ENCODE measurements at regions of chr12 and their contacts with region 1.

Region 1: DNA sequence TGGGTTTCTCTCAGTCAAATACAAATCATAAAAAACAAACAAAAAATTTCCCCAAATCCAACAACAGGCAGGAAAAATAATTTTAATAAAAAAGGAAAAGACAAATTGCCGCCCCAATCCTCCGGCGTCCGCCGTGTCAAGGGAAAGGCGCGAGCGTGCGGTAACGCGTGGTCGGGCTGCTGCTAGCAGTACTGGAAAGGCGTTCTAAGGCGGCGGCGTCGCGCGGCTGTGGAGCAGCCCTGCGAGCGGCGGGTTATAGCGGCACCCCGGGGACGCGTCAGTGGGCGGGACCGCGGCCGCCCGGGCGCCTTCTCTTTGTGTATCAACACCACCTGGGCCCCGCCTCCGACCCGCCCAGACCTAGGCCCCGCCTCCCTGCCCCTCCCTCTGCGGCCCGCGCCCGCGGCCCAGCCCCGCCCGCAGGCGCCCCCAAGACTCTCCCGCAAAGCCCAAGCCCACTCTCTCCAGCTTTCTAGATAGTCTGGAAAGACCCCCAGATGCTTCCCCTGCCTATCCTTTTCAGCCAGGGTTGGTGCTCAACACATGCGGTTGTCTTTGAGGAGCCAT is at the start of gene SLC38A2:
- DNase-seq: peak; percentile 93
- H3K4me3 ChIP-seq: peak within 1 kb of the TSS; percentile 90 to 98 (median 91)
- H3K27ac ChIP-seq: peak within 1 kb of the TSS; percentile 96
- H3K4me1 ChIP-seq: peaks cover 29% of the 10 kb centered on the region
- H3K27me3 ChIP-seq: no peaks in the 10 kb centered on the region
- CTCF ChIP-seq: no peak
- POLR2A ChIP-seq: peak; percentile 100
- total RNA-seq, gene SLC38A2: 427 and 459 TPM in 2 replicates

Region 2: GRCh38 chr12:46246021-46246700 is 126.5 kb before region 1 on chr12:
- CTCF ChIA-PET with region 1: no interaction called
- POLR2A ChIA-PET with region 1: no interaction called
- dilution Hi-C with region 1: no loop called
- intact Hi-C with region 1: no loop called
- DNase-seq: peak; percentile 25
- H3K4me3 ChIP-seq: no peak overlapping the region
- H3K27ac ChIP-seq: no peak overlapping the region
- H3K4me1 ChIP-seq: peaks cover 9% of the 10 kb centered on the region
- H3K27me3 ChIP-seq: no peaks in the 10 kb centered on the region
- CTCF ChIP-seq: no peak
- POLR2A ChIP-seq: no peak

Region 3: GRCh38 chr12:46268590-46269558 is 103.8 kb before region 1 on chr12 and contains the start of gene SLC38A1:
- CTCF ChIA-PET with region 1: no interaction called
- POLR2A ChIA-PET with region 1: no interaction called
- dilution Hi-C with region 1: no loop called
- intact Hi-C with region 1: loop called (anchors 5 kb)
- DNase-seq: peak; percentile 73
- H3K4me3 ChIP-seq: peak within 1 kb of the TSS; percentile 59 to 85 (median 84)
- H3K27ac ChIP-seq: peak within 1 kb of the TSS; percentile 82
- H3K4me1 ChIP-seq: peaks cover 31% of the 10 kb centered on the region
- H3K27me3 ChIP-seq: no peaks in the 10 kb centered on the region
- CTCF ChIP-seq: no peak
- POLR2A ChIP-seq: peak; percentile 66
- total RNA-seq, gene SLC38A1: 81.0 and 86.4 TPM in 2 replicates

Region 4: GRCh38 chr12:46430340-46430948 is 57.8 kb after region 1 on chr12:
- CTCF ChIA-PET with region 1: interaction called, 5 read pairs
- POLR2A ChIA-PET with region 1: interaction called, 20 read pairs
- dilution Hi-C with region 1: no loop called
- intact Hi-C with region 1: loop called (anchors 1 kb)
- DNase-seq: peak; percentile 97
- H3K4me3 ChIP-seq: peak overlapping the region in 1 of 3 experiments; percentile 48
- H3K27ac ChIP-seq: peak overlapping the region; percentile 99
- H3K4me1 ChIP-seq: peaks cover 43% of the 10 kb centered on the region
- H3K27me3 ChIP-seq: no peaks in the 10 kb centered on the region
- CTCF ChIP-seq: no peak
- POLR2A ChIP-seq: peak; percentile 72

Region 5: GRCh38 chr12:46473634-46474329 is 101.2 kb after region 1 on chr12:
- CTCF ChIA-PET with region 1: interaction called, 3 read pairs
- POLR2A ChIA-PET with region 1: no interaction called
- dilution Hi-C with region 1: no loop called
- intact Hi-C with region 1: loop called (anchors 1 kb)
- DNase-seq: peak; percentile 98
- H3K4me3 ChIP-seq: peak overlapping the region in 1 of 3 experiments; percentile 29
- H3K27ac ChIP-seq: peak overlapping the region; percentile 94
- H3K4me1 ChIP-seq: peaks cover 56% of the 10 kb centered on the region
- H3K27me3 ChIP-seq: no peaks in the 10 kb centered on the region
- CTCF ChIP-seq: no peak
- POLR2A ChIP-seq: peak; percentile 19

Region 6: DNA sequence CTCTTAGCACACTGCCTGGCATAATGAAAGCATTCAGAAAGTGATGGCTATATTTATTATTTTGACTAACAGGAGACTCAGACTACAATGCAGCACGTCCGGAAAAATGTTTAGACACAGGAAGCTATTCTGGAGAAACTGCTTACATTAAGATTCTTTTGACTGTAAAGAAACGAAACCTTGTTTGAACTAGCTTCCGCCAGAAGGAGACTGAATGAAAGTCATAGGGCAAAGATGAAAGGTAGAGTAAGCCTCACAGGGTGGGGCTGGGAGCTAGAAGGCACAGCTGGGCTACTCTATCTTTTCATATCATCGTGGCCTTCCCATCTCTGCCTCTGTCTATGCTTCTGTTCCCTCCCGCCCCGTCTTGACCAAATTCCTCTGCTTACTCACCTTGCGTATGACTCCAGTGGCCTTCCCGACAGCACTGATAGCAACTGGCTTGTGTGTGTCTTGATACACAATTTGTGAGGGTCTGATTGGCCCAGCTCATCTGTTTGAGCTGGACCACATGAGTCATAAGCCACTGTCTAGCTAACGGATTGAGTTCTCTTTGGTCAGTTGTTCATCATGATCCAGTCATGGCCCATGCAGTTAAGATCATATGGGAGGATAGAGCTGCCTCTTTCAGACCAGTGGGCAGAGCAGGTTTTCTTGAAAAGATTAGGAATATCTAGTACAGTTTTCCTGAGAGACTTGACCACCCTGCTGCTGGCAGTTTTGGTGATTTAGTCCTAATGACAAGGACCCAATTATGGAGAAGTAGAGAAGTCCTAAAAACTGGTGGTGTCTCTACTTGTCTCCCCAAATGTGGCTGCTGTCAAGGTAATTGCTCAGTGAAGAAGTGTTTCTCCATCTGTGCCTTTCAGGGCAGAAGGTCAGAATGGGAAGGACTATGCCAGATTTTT is 151.5 kb after region 1 on chr12:
- CTCF ChIA-PET with region 1: no interaction called
- POLR2A ChIA-PET with region 1: no interaction called
- dilution Hi-C with region 1: no loop called
- intact Hi-C with region 1: loop called (anchors 2 kb)
- DNase-seq: peak; percentile 83
- H3K4me3 ChIP-seq: peak overlapping the region in 1 of 3 experiments; percentile 34
- H3K27ac ChIP-seq: peak overlapping the region; percentile 81
- H3K4me1 ChIP-seq: peaks cover 33% of the 10 kb centered on the region
- H3K27me3 ChIP-seq: no peaks in the 10 kb centered on the region
- CTCF ChIP-seq: no peak
- POLR2A ChIP-seq: no peak

Region 7: GRCh38 chr12:46983393-46984266 is 611.0 kb after region 1 on chr12:
- CTCF ChIA-PET with region 1: interaction called, 3 read pairs
- POLR2A ChIA-PET with region 1: no interaction called
- dilution Hi-C with region 1: no loop called
- intact Hi-C with region 1: loop called (anchors 1 kb)
- DNase-seq: peak; percentile 71
- H3K4me3 ChIP-seq: no peak overlapping the region
- H3K27ac ChIP-seq: no peak overlapping the region
- H3K4me1 ChIP-seq: no peaks in the 10 kb centered on the region
- H3K27me3 ChIP-seq: peaks cover 0 to 8% of the 10 kb centered on the region in 2 experiments
- CTCF ChIP-seq: peak; percentile 75 to 76
- POLR2A ChIP-seq: no peak